ENCODE measurements at regions of chr15 and their contacts with region 1.

Region 1: DNA sequence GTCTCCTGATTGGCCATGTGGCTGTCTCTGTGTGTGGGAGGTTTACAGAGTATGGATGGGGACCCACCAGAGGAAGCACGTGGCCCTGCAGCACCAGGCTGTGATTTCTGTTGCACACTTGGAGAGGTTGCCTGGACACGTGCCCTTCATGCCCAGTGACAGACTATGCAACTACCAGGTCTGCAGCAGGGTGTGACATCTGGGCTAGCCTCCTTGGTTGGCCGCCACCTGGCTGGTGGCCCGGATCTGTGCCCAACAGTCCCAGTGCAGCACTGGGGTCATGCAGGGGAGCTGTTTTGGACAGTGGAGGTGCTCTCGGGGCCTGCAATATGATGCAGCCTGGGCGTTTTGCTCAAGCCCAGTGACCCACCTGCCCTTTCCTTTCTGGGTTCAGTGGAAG is 212.5 kb downstream of the UBE3A start:
- DNase-seq: no peak
- ATAC-seq: no peak
- H3K4me3 ChIP-seq: no peak overlapping the region
- H3K27ac ChIP-seq: no peak overlapping the region
- H3K4me1 ChIP-seq: no peaks in the 10 kb centered on the region
- H3K27me3 ChIP-seq: no peaks in the 10 kb centered on the region
- CTCF ChIP-seq: no peak
- POLR2A ChIP-seq: no peak
- RAD21 ChIP-seq: no peak

Region 2: GRCh38 chr15:24878153-24878552 is 348.2 kb before region 1 on chr15:
- CTCF ChIA-PET with region 1: no interaction called
- POLR2A ChIA-PET with region 1: no interaction called
- dilution Hi-C with region 1: no loop called
- in situ Hi-C with region 1: no loop called
- intact Hi-C with region 1: no loop called
- DNase-seq: peak; percentile 61
- ATAC-seq: peak; percentile 92
- H3K4me3 ChIP-seq: peak overlapping the region; percentile 72
- H3K27ac ChIP-seq: peak overlapping the region; percentile 54
- H3K4me1 ChIP-seq: no peaks in the 10 kb centered on the region
- H3K27me3 ChIP-seq: no peaks in the 10 kb centered on the region
- CTCF ChIP-seq: no peak
- POLR2A ChIP-seq: no peak
- RAD21 ChIP-seq: no peak

Region 3: GRCh38 chr15:25171856-25172687 is 54.3 kb before region 1 on chr15:
- CTCF ChIA-PET with region 1: no interaction called
- POLR2A ChIA-PET with region 1: no interaction called
- dilution Hi-C with region 1: no loop called
- in situ Hi-C with region 1: loop called (anchors 10 kb)
- intact Hi-C with region 1: no loop called
- DNase-seq: no peak
- ATAC-seq: no peak
- H3K4me3 ChIP-seq: no peak overlapping the region
- H3K27ac ChIP-seq: no peak overlapping the region
- H3K4me1 ChIP-seq: no peaks in the 10 kb centered on the region
- H3K27me3 ChIP-seq: no peaks in the 10 kb centered on the region
- CTCF ChIP-seq: no peak
- POLR2A ChIP-seq: no peak
- RAD21 ChIP-seq: no peak

Measured in IMR-90 (cell line).